Activated CD4-positive, alpha-beta T cell treated with anti-CD3 and anti-CD28 coated beads, Interleukin-2, amount 10 ng/mL, durations not matched to agents 24 days and 14 days (primary cell): ENCODE measurements at regions of chr18 and their contacts with region 1.

Region 1: GRCh38 chr18:46173393-46174341 is 69.5 kb downstream of the HAUS1 start:
- DNase-seq: peak; percentile 98
- H3K4me3 Mint-ChIP-seq: peak overlapping the region; percentile 96
- H3K27ac Mint-ChIP-seq: peak overlapping the region; percentile 96
- H3K4me1 Mint-ChIP-seq: peaks cover 48% of the 10 kb centered on the region
- H3K27me3 Mint-ChIP-seq: peaks cover 2% of the 10 kb centered on the region

Region 2: GRCh38 chr18:46097801-46098615 is 75.7 kb before region 1 on chr18 and contains the start of gene ATP5F1A:
- intact Hi-C with region 1: loop called (anchors 2 kb)
- DNase-seq: peak; percentile 95
- H3K4me3 Mint-ChIP-seq: peak within 1 kb of the TSS; percentile 98
- H3K27ac Mint-ChIP-seq: peak within 1 kb of the TSS; percentile 99
- H3K4me1 Mint-ChIP-seq: peaks cover 19% of the 10 kb centered on the region
- H3K27me3 Mint-ChIP-seq: no peaks in the 10 kb centered on the region
- total RNA-seq, gene ATP5F1A: 440 and 443 TPM in 2 replicates

Region 3: DNA sequence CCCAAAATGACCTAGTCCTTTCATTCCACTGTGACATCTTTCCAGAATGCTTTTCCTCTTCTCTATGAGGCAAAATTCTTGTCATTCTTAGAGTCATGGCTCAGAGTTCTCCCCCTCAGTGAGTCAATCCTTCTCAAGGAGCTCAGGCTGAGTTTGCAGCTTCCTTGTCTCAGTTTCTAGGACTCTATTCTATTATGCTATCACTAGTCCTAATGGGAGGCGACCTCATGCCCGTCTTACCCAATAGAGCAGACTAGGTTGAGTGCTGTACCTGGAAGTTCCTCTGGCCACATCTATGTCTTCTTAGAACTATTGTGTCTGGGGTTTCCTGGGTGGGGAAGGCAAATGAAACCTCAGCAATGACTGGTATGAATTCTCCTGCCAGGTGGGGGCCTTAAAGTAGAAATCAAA is 18.0 kb before region 1 on chr18:
- intact Hi-C with region 1: loop called (anchors 2 kb)
- DNase-seq: peak; percentile 90
- H3K4me3 Mint-ChIP-seq: peak overlapping the region; percentile 64
- H3K27ac Mint-ChIP-seq: peak overlapping the region; percentile 87
- H3K4me1 Mint-ChIP-seq: peaks cover 65% of the 10 kb centered on the region
- H3K27me3 Mint-ChIP-seq: no peaks in the 10 kb centered on the region

Region 4: GRCh38 chr18:46250084-46250811 is 76.6 kb after region 1 on chr18:
- intact Hi-C with region 1: loop called (anchors 1 kb)
- DNase-seq: peak; percentile 92
- H3K4me3 Mint-ChIP-seq: peak overlapping the region; percentile 71
- H3K27ac Mint-ChIP-seq: peak overlapping the region; percentile 90
- H3K4me1 Mint-ChIP-seq: peaks cover 52% of the 10 kb centered on the region
- H3K27me3 Mint-ChIP-seq: peaks cover 2% of the 10 kb centered on the region

Region 5: DNA sequence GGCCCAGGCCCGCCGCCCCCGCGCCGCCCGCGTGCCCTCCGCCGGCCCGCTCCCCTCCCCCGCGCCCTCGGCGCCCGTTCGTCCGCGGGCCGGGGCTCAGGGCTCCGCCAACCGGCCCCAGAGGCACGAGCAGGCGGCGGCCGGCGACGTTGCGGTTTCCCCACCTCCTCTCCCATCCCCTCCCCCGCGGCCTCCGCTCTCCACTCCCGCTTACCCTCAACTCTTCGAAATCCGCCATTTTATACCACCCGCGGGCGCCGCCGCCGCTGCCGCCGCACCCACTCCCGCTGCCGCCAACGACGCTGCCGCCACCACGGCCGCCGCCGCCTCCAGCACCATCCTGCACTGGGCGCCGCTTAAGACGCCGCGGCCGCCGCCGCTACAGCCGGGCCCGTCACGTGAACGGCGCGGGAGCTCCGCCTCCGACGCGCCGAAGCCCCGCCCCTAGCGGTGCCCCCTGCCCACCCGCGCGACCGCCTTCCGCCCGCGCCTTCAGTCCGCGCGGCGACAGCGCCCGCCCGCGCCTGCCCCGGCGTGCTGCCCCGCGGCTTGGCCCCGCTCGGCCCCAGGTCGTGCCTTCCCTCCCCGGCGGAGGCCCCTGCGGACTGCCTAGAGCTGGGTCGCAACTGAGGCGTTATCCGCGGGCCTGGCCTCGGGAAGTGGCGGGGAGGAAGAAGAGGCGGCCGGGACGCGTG is 743.6 kb after region 1 on chr18 and contains the starts of genes KATNAL2 and PIAS2:
- intact Hi-C with region 1: loop called (anchors 10 kb)
- DNase-seq: peak; percentile 93
- H3K4me3 Mint-ChIP-seq: peak within 1 kb of the TSS; percentile 93
- H3K27ac Mint-ChIP-seq: peak within 1 kb of the TSS; percentile 90
- H3K4me1 Mint-ChIP-seq: peaks cover 42% of the 10 kb centered on the region
- H3K27me3 Mint-ChIP-seq: peaks cover 13% of the 10 kb centered on the region
- total RNA-seq, gene KATNAL2: 0.40 TPM in 1 of 2 replicates, not detected in the other
- total RNA-seq, gene PIAS2: 33.9 and 39.3 TPM in 2 replicates